HepG2 (cell line): ENCODE measurements at regions of chr16 and their contacts with region 1.

Region 1: GRCh38 chr16:27268376-27269299 is at the start of gene NSMCE1:
- DNase-seq: peak; percentile 96
- ATAC-seq: peak; percentile 94
- H3K4me3 ChIP-seq: peak within 1 kb of the TSS; percentile 83 to 96 (median 94)
- H3K27ac ChIP-seq: peak within 1 kb of the TSS; percentile 79
- H3K4me1 ChIP-seq: peaks cover 81% of the 10 kb centered on the region
- H3K27me3 ChIP-seq: no peaks in the 10 kb centered on the region; a peak in 1 of 5 replicates
- CTCF ChIP-seq: peak; percentile 40
- EP300 ChIP-seq: no peak
- POLR2A ChIP-seq: peak; percentile 87 to 93
- RAD21 ChIP-seq: peak; percentile 23; the same call in 1 of the 2 replicates
- total RNA-seq, gene NSMCE1: 52.9 and 53.2 TPM in 2 replicates

Region 2: DNA sequence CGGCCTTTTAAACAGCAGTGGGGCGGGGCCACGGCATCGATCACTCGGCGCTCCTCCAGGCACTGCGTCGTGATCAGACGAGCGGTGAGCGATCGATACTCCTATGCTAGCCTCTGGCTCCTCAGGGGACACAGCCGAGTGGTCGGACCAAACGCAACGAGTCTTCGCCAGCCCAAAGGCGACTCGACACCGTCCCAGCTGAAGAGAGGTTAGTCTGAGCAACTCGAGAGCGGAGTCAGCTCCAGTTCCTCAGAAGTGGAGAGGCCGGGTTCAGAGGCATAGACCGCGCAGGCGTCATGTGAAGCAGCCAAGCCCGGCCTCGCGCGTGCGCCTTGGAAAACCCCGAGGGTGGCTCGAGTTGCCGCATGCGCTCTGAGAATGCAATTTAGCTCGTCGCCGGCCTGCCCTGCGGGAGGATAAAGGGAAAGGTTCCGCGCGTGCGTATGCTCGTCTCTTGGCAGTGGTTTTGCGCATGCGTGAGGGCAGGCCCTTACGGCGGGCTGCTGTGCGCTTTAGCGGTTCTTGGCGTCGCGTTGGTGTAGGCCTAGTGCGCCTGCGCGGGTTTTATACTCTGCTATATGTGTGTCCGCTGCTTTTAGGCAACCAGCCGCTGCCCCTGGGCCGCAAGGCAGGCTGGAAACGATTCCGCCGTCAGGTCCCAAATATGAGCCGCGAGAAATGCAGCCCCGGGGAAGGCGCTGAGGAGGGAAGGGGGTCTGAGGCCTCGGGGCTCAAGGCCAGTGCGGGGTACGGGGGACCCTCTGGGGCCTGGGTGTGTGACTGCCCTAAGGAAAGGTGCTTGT is 65.0 kb before region 1 on chr16 and contains the start of gene KDM8:
- CTCF ChIA-PET with region 1: no interaction called
- POLR2A ChIA-PET with region 1: interaction called, 15 read pairs
- in situ Hi-C with region 1: no loop called
- intact Hi-C with region 1: loop called (anchors 2 kb)
- DNase-seq: peak; percentile 100
- ATAC-seq: peak; percentile 93
- H3K4me3 ChIP-seq: peak within 1 kb of the TSS; percentile 70 to 93 (median 90)
- H3K27ac ChIP-seq: peak within 1 kb of the TSS; percentile 97
- H3K4me1 ChIP-seq: peaks cover 41% of the 10 kb centered on the region
- H3K27me3 ChIP-seq: no peaks in the 10 kb centered on the region; a peak in 1 of 5 replicates
- CTCF ChIP-seq: no peak
- EP300 ChIP-seq: peak in 1 of 2 experiments; percentile 16; a peak in 1 of 4 replicates
- POLR2A ChIP-seq: peak; percentile 92 to 98
- RAD21 ChIP-seq: peak; percentile 76
- total RNA-seq, gene KDM8: 5.2 and 8.6 TPM in 2 replicates

Region 3: GRCh38 chr16:27242868-27243590 is 25.6 kb before region 1 on chr16:
- CTCF ChIA-PET with region 1: no interaction called
- POLR2A ChIA-PET with region 1: interaction called, 5 read pairs
- in situ Hi-C with region 1: no loop called
- intact Hi-C with region 1: loop called (anchors 2 kb)
- DNase-seq: peak; percentile 83
- ATAC-seq: peak; percentile 94
- H3K4me3 ChIP-seq: peak overlapping the region in 2 of 3 experiments; percentile 4 to 26; a peak in 4 of 6 replicates
- H3K27ac ChIP-seq: peak overlapping the region; percentile 45
- H3K4me1 ChIP-seq: peaks cover 21% of the 10 kb centered on the region
- H3K27me3 ChIP-seq: no peaks in the 10 kb centered on the region
- CTCF ChIP-seq: no peak
- EP300 ChIP-seq: peak in 1 of 2 experiments; percentile 16; a peak in 1 of 4 replicates
- POLR2A ChIP-seq: no peak
- RAD21 ChIP-seq: no peak

Region 4: GRCh38 chr16:27286451-27286850 is 17.8 kb after region 1 on chr16:
- CTCF ChIA-PET with region 1: no interaction called
- POLR2A ChIA-PET with region 1: interaction called, 17 read pairs
- in situ Hi-C with region 1: no loop called
- intact Hi-C with region 1: no loop called
- DNase-seq: peak; percentile 64
- ATAC-seq: peak; percentile 33; the same call in 2 of the 3 replicates
- H3K4me3 ChIP-seq: no peak overlapping the region
- H3K27ac ChIP-seq: no peak overlapping the region
- H3K4me1 ChIP-seq: peaks cover 45% of the 10 kb centered on the region
- H3K27me3 ChIP-seq: no peaks in the 10 kb centered on the region; a peak in 1 of 5 replicates
- CTCF ChIP-seq: no peak
- EP300 ChIP-seq: no peak; a peak in 1 of 4 replicates
- POLR2A ChIP-seq: no peak
- RAD21 ChIP-seq: no peak

Region 5: GRCh38 chr16:27318392-27319226 is 50.0 kb after region 1 on chr16:
- CTCF ChIA-PET with region 1: no interaction called
- POLR2A ChIA-PET with region 1: interaction called, 13 read pairs
- in situ Hi-C with region 1: loop called (anchors 5 kb)
- intact Hi-C with region 1: no loop called
- DNase-seq: no peak
- ATAC-seq: no peak
- H3K4me3 ChIP-seq: no peak overlapping the region
- H3K27ac ChIP-seq: no peak overlapping the region
- H3K4me1 ChIP-seq: peaks cover 75% of the 10 kb centered on the region
- H3K27me3 ChIP-seq: no peaks in the 10 kb centered on the region; a peak in 1 of 5 replicates
- CTCF ChIP-seq: no peak
- EP300 ChIP-seq: no peak
- POLR2A ChIP-seq: no peak
- RAD21 ChIP-seq: no peak

Region 6: DNA sequence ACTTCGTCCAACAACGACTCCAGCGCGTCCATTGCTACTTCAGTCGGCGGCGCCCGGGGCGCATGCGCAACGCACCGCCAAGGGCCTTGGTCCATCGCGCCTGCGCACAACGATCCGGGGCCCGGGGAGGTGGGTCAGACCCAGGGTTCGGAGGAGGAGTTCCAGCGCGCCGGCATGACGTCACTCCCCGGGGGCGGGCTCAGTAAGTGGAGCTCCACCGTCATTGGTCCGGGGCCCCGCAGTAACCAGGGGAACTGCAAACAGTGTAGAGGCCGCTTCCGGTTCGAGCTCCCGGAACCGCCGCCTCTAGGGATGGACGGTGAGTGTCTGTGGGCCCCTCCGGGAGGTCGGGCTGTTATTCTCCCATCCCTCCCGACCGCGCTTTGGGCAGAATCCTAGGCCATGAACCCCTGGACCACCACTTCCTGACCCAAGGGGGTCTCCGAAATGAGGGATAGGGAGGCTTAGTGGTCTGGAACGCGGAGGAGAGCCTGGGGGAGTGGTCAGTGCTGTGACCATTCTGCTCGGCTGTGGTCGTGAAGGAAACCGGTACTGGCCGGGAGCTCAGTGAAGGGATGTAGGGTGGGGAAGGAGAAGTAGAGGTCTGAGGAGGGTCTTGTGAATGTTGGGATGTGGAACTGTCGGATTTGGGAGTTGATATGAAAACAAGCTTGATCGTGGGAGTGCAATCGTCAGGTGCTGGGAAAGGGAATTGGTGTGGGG is 281.4 kb after region 1 on chr16 and contains the starts of genes GTF3C1 and KATNIP:
- CTCF ChIA-PET with region 1: no interaction called
- POLR2A ChIA-PET with region 1: no interaction called
- in situ Hi-C with region 1: no loop called
- intact Hi-C with region 1: no loop called
- DNase-seq: peak; percentile 98
- ATAC-seq: peak; percentile 99
- H3K4me3 ChIP-seq: peak within 1 kb of the TSS; percentile 85 to 98 (median 94)
- H3K27ac ChIP-seq: peak within 1 kb of the TSS; percentile 64
- H3K4me1 ChIP-seq: peaks cover 34% of the 10 kb centered on the region
- H3K27me3 ChIP-seq: no peaks in the 10 kb centered on the region; a peak in 1 of 5 replicates
- CTCF ChIP-seq: no peak
- EP300 ChIP-seq: no peak
- POLR2A ChIP-seq: peak; percentile 90 to 93
- RAD21 ChIP-seq: no peak
- total RNA-seq, gene GTF3C1: 44.9 and 72.7 TPM in 2 replicates
- total RNA-seq, gene KATNIP: 11.8 and 12.0 TPM in 2 replicates